OCI-LY7 (cell line): ENCODE measurements at regions of chr12 and their contacts with region 1.

Region 1: GRCh38 chr12:83005534-83006197 is 319.0 kb downstream of the TMTC2 start:
- DNase-seq: no peak
- H3K4me3 ChIP-seq: no peak overlapping the region
- H3K27ac ChIP-seq: no peak overlapping the region
- H3K4me1 ChIP-seq: no peaks in the 10 kb centered on the region
- CTCF ChIP-seq: no peak

Region 2: DNA sequence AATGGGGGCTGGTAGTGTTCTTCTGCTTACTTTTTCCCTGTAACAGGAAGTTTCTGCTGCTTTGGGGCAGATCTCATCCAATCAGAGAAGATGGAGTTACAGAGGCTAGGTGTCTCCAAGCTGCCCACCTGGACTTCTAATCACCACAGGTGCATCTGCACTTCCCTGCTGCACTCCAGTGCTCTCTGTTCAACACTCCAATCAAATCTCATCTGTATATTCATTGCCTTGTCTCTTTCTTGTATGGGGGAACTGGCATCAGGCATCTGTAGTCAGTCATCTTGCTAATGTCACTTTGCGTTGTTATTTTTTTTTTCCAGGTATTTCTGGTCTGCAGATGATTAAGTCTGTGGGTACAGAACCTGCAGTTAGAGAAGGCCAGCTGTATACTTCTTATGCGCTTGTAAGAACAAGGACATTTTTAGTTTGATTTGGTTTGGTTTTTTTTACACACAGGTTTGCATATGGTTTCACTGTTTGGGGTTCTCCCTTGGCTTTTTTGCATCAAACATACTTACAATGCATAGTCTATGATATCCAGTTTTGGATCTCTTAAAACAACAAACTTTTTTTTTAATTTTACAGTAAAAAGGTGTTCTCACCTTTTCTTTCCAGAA is 531.4 kb before region 1 on chr12:
- CTCF ChIA-PET with region 1: no interaction called
- POLR2A ChIA-PET with region 1: no interaction called
- intact Hi-C with region 1: no loop called
- DNase-seq: no peak
- H3K4me3 ChIP-seq: no peak overlapping the region
- H3K27ac ChIP-seq: no peak overlapping the region
- H3K4me1 ChIP-seq: no peaks in the 10 kb centered on the region
- CTCF ChIP-seq: no peak

Region 3: DNA sequence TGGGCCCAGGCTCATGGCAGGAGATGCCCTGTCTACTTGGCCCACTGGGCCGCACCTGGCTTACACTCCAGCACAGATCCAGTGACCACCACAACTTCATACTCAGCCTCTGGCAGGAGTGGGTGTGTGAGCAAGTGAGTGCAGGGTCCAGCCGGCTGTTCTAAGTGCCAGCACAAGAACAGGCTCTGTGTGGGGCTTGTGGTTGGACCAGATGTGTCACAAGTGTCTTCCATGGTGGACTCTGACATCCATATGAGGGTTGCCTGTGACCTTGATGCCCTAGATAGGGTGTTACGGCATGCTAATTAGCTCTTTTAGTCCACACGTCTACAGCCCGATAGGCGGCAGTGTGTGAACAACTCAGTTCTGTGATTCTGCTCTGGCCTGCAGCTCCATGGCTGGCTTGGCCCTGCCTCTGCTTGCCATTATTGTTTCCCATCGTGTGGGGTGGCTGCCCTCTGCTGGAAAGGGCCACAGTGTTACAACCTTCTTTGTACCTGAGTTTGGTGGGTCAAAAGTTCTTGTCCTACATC is 817.8 kb after region 1 on chr12:
- CTCF ChIA-PET with region 1: no interaction called
- POLR2A ChIA-PET with region 1: no interaction called
- intact Hi-C with region 1: loop called (anchors 10 kb)
- DNase-seq: peak; percentile 55
- H3K4me3 ChIP-seq: no peak overlapping the region
- H3K27ac ChIP-seq: no peak overlapping the region
- H3K4me1 ChIP-seq: no peaks in the 10 kb centered on the region
- CTCF ChIP-seq: peak; percentile 70

Region 4: GRCh38 chr12:84397263-84397662 is 1391.6 kb after region 1 on chr12:
- CTCF ChIA-PET with region 1: no interaction called
- POLR2A ChIA-PET with region 1: no interaction called
- intact Hi-C with region 1: loop called (anchors 10 kb)
- DNase-seq: no peak
- H3K4me3 ChIP-seq: no peak overlapping the region
- H3K27ac ChIP-seq: no peak overlapping the region
- H3K4me1 ChIP-seq: no peaks in the 10 kb centered on the region
- CTCF ChIP-seq: peak; percentile 68